Activated naive CD4-positive, alpha-beta T cell treated with anti-CD3 and anti-CD28 coated beads for 36 hours (primary cell): ENCODE measurements at regions of chr13 and their contacts with region 1.

Region 1: DNA sequence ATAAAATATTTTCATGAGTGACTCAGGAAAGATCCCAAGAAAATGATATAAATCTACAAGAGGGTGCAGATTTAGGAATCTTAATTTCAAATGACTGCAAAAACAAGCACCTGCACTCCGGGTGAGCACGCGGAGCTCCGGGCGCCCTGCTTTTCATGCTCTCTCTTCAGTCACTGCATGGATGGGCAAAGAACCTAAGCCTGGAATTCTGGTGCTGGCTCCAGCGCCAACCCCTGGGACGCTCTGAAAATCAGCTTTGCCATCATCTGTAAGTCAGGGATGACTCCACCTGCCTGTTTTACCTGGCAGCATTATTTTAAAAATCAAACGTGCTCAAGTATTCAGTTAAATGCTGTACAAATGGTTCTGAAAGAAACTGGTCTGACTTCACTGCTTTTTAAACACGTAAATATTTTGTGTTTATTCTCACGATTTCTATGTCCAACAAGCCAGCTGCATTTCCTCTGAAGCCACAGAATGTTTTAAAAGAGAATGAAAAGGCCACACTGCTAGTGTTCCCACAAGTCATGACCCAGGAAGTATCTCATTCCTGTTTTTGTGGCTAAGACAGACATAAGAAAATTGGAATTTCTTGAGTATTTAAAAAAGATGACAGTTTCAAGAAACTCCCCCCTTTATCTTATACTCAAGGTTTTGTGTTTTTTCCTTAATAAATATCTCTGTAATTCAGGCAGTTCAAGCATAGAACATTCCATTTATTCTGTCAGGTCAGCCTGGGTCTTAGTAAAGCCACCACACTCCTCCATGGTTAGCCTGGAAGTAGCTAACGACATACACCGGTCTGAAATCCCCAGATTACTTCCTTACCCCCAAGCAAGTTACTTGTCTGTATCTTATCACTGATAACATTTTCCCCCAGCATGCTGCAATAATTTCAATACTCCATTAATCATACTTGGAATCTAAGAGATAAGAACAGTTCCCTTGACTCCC is 81.1 kb downstream of the COL4A1 start:
- DNase-seq: no peak
- H3K4me3 Mint-ChIP-seq: no peak overlapping the region
- H3K27ac Mint-ChIP-seq: no peak overlapping the region
- H3K4me1 Mint-ChIP-seq: no peaks in the 10 kb centered on the region
- H3K27me3 Mint-ChIP-seq: peaks cover 16% of the 10 kb centered on the region

Region 2: DNA sequence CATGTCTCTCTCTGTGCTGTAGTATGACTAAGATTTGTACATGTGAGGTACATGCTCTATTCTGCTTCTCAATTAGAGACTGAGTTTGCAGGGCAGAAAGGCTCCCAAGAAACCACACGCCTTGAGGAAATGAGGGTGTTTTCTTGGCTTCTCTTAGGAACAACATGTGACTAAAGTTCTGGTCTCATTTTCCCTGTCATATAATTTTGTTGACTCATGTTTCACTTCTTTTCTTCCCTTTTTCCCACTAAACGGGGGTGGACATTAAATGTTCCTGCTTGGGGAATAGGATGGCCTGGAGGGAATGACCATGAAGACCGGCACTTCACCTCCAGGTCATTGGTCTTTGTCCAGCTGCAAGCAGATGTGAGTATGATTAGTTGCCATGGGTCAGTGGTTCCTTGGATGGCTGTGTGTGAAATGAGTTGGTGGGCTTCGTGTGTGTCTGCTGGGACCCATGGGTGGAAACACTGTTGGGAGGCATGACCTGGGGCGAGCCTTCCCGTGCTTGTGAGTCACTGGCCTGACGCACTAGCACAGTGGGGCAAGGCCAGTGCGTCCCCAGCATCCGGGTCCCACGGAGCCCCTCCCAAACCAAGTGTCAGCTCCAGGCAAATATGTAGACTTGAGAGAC is 24.5 kb after region 1 on chr13:
- CTCF ChIA-PET with region 1: no interaction called
- intact Hi-C with region 1: no loop called
- DNase-seq: no peak
- H3K4me3 Mint-ChIP-seq: no peak overlapping the region
- H3K27ac Mint-ChIP-seq: no peak overlapping the region
- H3K4me1 Mint-ChIP-seq: no peaks in the 10 kb centered on the region
- H3K27me3 Mint-ChIP-seq: peaks cover 14% of the 10 kb centered on the region

Region 3: GRCh38 chr13:110444226-110444653 is 218.4 kb after region 1 on chr13:
- CTCF ChIA-PET with region 1: interaction called, 11 read pairs
- intact Hi-C with region 1: loop called (anchors 1 kb)
- DNase-seq: peak; percentile 30
- H3K4me3 Mint-ChIP-seq: no peak overlapping the region
- H3K27ac Mint-ChIP-seq: no peak overlapping the region
- H3K4me1 Mint-ChIP-seq: no peaks in the 10 kb centered on the region
- H3K27me3 Mint-ChIP-seq: peaks cover 47% of the 10 kb centered on the region

Region 4: DNA sequence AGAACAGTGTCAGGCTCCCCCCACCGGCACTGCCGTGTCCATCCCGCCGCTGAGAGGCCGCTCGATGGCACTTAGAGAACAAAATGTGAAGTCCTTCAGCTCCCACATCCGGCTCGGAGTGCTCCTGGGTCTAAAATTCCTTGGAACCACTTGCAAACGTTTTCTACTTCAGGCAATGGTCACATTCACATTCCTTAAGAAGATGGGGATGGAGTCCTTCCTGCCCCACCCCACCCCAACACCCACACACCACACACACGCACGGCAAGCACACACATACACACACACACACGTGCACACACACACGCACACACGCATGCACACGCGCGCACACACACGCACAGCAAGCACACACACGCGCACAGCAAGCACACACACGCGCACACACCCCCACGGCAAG is 1924.5 kb after region 1 on chr13:
- CTCF ChIA-PET with region 1: no interaction called
- intact Hi-C with region 1: no loop called
- DNase-seq: no peak
- H3K4me3 Mint-ChIP-seq: no peak overlapping the region
- H3K27ac Mint-ChIP-seq: no peak overlapping the region
- H3K4me1 Mint-ChIP-seq: no peaks in the 10 kb centered on the region
- H3K27me3 Mint-ChIP-seq: peaks cover 5% of the 10 kb centered on the region